ENCODE measurements at regions of chr11 and their contacts with region 1.

Region 1: GRCh38 chr11:7538031-7538430 is 24.2 kb downstream of the PPFIBP2 start:
- H3K4me3 ChIP-seq: no peak overlapping the region
- H3K27ac ChIP-seq: no peak overlapping the region
- H3K4me1 ChIP-seq: no peaks in the 10 kb centered on the region
- CTCF ChIP-seq: no peak

Region 2: GRCh38 chr11:7548659-7549274 is 10.7 kb after region 1 on chr11:
- CTCF ChIA-PET with region 1: interaction called, 14 read pairs
- POLR2A ChIA-PET with region 1: no interaction called
- H3K4me3 ChIP-seq: no peak overlapping the region
- H3K27ac ChIP-seq: no peak overlapping the region
- H3K4me1 ChIP-seq: no peaks in the 10 kb centered on the region
- CTCF ChIP-seq: 0 out of 2 replicates have a peak, but pooled peaks have one; percentile 16

Region 3: DNA sequence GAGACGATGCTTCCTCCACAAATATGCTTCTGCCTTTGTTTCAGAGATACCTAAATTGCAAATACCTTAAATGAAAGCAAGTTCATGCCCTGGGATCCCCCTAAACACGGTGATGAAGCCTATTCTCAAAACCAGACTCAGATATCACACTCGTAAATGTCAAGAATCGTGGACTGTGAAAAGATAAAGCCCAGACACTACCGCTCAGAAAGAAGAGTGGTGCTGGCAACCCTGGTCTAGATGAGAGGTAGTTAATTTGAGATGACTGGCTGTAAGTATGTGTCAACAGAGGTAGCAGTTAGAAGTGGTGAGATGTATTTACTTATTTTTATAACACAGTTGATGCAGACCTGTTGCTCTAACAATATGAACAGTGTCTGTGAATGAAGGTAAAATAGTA is 165.7 kb after region 1 on chr11:
- CTCF ChIA-PET with region 1: no interaction called
- POLR2A ChIA-PET with region 1: no interaction called
- H3K4me3 ChIP-seq: no peak overlapping the region
- H3K27ac ChIP-seq: no peak overlapping the region
- H3K4me1 ChIP-seq: no peaks in the 10 kb centered on the region
- CTCF ChIP-seq: no peak

Measured in HEK293 (cell line).